SK-N-SH (cell line): ENCODE measurements at regions of chr7 and their contacts with region 1.

Region 1: GRCh38 chr7:90629297-90629918 is 33.3 kb downstream of the CDK14 start:
- DNase-seq: peak; percentile 68
- H3K4me3 ChIP-seq: no peak overlapping the region
- H3K27ac ChIP-seq: no peak overlapping the region
- H3K4me1 ChIP-seq: peaks cover 11 to 18% of the 10 kb centered on the region in 2 experiments
- H3K27me3 ChIP-seq: no peaks in the 10 kb centered on the region
- CTCF ChIP-seq: peak; percentile 84
- EP300 ChIP-seq: no peak
- RAD21 ChIP-seq: peak; percentile 94

Region 2: DNA sequence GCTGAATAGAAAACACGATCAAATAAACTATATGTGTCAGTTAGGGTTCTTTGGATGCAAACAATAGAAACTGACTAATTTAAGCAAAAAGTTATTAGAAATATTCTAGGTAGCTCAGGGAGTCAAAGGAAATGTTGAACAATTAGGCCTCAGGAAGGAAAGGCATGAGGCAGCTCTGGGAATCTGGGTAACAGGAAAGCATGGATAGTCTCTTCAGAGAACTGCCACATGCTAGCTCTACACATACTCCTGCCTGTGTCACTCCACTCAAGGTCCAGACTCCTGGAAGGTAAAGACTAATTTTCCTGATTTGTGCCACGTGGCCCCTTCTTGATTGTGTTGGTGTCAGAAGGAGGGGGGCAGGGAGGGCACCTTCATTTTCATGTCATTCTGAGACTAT is 183.8 kb before region 1 on chr7:
- CTCF ChIA-PET with region 1: interaction called, 11 read pairs
- POLR2A ChIA-PET with region 1: no interaction called
- DNase-seq: no peak
- H3K4me3 ChIP-seq: no peak overlapping the region
- H3K27ac ChIP-seq: no peak overlapping the region
- H3K4me1 ChIP-seq: no peaks in the 10 kb centered on the region
- H3K27me3 ChIP-seq: no peaks in the 10 kb centered on the region
- CTCF ChIP-seq: no peak
- EP300 ChIP-seq: no peak
- RAD21 ChIP-seq: no peak

Region 3: GRCh38 chr7:90552521-90552920 is 76.9 kb before region 1 on chr7:
- CTCF ChIA-PET with region 1: interaction called, 12 read pairs
- POLR2A ChIA-PET with region 1: no interaction called
- DNase-seq: no peak
- H3K4me3 ChIP-seq: no peak overlapping the region
- H3K27ac ChIP-seq: no peak overlapping the region
- H3K4me1 ChIP-seq: no peaks in the 10 kb centered on the region
- H3K27me3 ChIP-seq: no peaks in the 10 kb centered on the region
- CTCF ChIP-seq: peak; percentile 60
- EP300 ChIP-seq: no peak
- RAD21 ChIP-seq: peak; percentile 59

Region 4: GRCh38 chr7:90611115-90611514 is 18.3 kb before region 1 on chr7:
- CTCF ChIA-PET with region 1: interaction called, 13 read pairs
- POLR2A ChIA-PET with region 1: no interaction called
- DNase-seq: no peak
- H3K4me3 ChIP-seq: no peak overlapping the region
- H3K27ac ChIP-seq: no peak overlapping the region
- H3K4me1 ChIP-seq: peaks cover 4 to 16% of the 10 kb centered on the region in 2 experiments; a peak in 3 of 4 replicates
- H3K27me3 ChIP-seq: no peaks in the 10 kb centered on the region
- CTCF ChIP-seq: no peak
- EP300 ChIP-seq: no peak
- RAD21 ChIP-seq: no peak

Region 5: GRCh38 chr7:90661290-90662151 is 32.1 kb after region 1 on chr7:
- CTCF ChIA-PET with region 1: interaction called, 13 read pairs
- POLR2A ChIA-PET with region 1: no interaction called
- DNase-seq: no peak
- H3K4me3 ChIP-seq: no peak overlapping the region
- H3K27ac ChIP-seq: no peak overlapping the region
- H3K4me1 ChIP-seq: peaks cover 0 to 23% of the 10 kb centered on the region in 2 experiments; a peak in 1 of 4 replicates
- H3K27me3 ChIP-seq: no peaks in the 10 kb centered on the region
- CTCF ChIP-seq: no peak
- EP300 ChIP-seq: no peak
- RAD21 ChIP-seq: no peak